ENCODE measurements at regions of chr16 and their contacts with region 1.

Region 1: GRCh38 chr16:2009789-2010510 is at the start of gene ZNF598:
- DNase-seq: peak; percentile 90
- ATAC-seq: peak; percentile 93
- H3K4me3 Mint-ChIP-seq: peak within 1 kb of the TSS; percentile 95
- H3K27ac Mint-ChIP-seq: peak within 1 kb of the TSS; percentile 90
- H3K4me1 Mint-ChIP-seq: peaks cover 35% of the 10 kb centered on the region
- H3K27me3 Mint-ChIP-seq: no peaks in the 10 kb centered on the region
- total RNA-seq, gene ZNF598: 64.6 to 69.8 TPM

Region 2: GRCh38 chr16:1705688-1706385 is 304.1 kb before region 1 on chr16 and contains the start of gene MAPK8IP3:
- CTCF ChIA-PET with region 1: no interaction called
- POLR2A ChIA-PET with region 1: no interaction called
- intact Hi-C with region 1: loop called in 1 of 2 experiments (anchors 1 kb)
- DNase-seq: peak; percentile 96
- ATAC-seq: peak; percentile 80
- H3K4me3 Mint-ChIP-seq: peak within 1 kb of the TSS; percentile 92
- H3K27ac Mint-ChIP-seq: peak within 1 kb of the TSS; percentile 90
- H3K4me1 Mint-ChIP-seq: peaks cover 32% of the 10 kb centered on the region
- H3K27me3 Mint-ChIP-seq: no peaks in the 10 kb centered on the region
- total RNA-seq, gene MAPK8IP3: 56.7 to 57.6 TPM

Region 3: DNA sequence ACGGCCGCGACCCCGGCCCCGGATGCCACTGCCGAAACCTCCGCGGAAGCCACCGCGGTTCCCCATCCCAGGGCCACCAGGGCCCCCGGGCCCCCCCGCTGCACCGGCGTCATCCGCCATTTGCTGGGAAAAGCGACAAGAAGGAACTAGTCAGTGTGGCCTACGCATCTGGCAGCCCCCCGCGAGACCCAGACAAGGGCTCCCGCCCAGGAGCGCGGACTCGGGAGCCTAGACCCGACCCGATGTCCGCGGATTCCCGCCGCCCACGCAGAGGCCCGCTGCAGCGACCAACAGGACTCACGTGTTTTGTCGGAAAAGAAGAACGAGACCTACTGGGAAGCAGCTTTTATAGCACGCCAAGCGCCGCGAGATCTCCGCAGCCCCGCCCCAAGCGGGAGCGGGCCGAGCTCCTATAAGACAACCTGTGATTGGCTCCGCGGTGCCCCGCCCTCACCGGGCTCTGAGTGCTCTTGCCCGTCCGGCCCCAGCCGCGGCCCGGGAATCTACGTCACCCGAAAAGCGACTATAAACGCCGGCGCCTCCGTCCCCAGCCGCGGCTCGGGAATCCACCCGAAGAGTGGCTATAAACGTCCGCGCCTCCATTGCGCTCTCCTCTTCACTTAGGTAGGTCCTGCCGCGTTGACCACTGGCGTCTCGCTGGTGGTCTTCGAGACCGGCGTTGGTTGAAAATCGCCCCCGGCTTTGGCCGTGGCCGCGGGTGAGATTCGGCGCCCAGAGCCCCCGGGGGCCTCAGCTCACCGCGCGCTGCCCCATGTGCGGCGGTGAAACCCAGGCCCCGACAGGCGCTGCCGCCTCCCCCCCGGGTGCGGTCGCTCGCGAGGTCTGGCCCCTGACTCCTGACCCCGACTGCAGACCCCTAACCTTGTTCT is 45.2 kb before region 1 on chr16 and contains the start of gene RPS2:
- CTCF ChIA-PET with region 1: no interaction called
- POLR2A ChIA-PET with region 1: interaction called, 3 read pairs
- intact Hi-C with region 1: loop called in 1 of 2 experiments (anchors 5 kb)
- DNase-seq: peak; percentile 100
- ATAC-seq: peak; percentile 81
- H3K4me3 Mint-ChIP-seq: peak within 1 kb of the TSS; percentile 96
- H3K27ac Mint-ChIP-seq: peak within 1 kb of the TSS; percentile 99
- H3K4me1 Mint-ChIP-seq: peaks cover 38% of the 10 kb centered on the region
- H3K27me3 Mint-ChIP-seq: no peaks in the 10 kb centered on the region
- total RNA-seq, gene RPS2: 5,351 to 6,287 TPM

Region 4: GRCh38 chr16:1991948-1992703 is 17.8 kb before region 1 on chr16:
- CTCF ChIA-PET with region 1: interaction called, 12 read pairs
- POLR2A ChIA-PET with region 1: interaction called, 7 read pairs
- intact Hi-C with region 1: loop called (anchors 1 to 2 kb)
- DNase-seq: peak; percentile 100
- ATAC-seq: peak; percentile 70
- H3K4me3 Mint-ChIP-seq: peak overlapping the region; percentile 56
- H3K27ac Mint-ChIP-seq: no peak overlapping the region
- H3K4me1 Mint-ChIP-seq: peaks cover 27% of the 10 kb centered on the region
- H3K27me3 Mint-ChIP-seq: peaks cover 15% of the 10 kb centered on the region

Region 5: GRCh38 chr16:2039274-2040031 is 29.5 kb after region 1 on chr16:
- CTCF ChIA-PET with region 1: no interaction called
- POLR2A ChIA-PET with region 1: no interaction called
- intact Hi-C with region 1: no loop called
- DNase-seq: no peak
- ATAC-seq: no peak
- H3K4me3 Mint-ChIP-seq: no peak overlapping the region
- H3K27ac Mint-ChIP-seq: no peak overlapping the region
- H3K4me1 Mint-ChIP-seq: no peaks in the 10 kb centered on the region
- H3K27me3 Mint-ChIP-seq: no peaks in the 10 kb centered on the region

Region 6: GRCh38 chr16:2147981-2148671 is 138.2 kb after region 1 on chr16 and contains the start of gene RAB26:
- CTCF ChIA-PET with region 1: no interaction called
- POLR2A ChIA-PET with region 1: interaction called, 3 read pairs
- intact Hi-C with region 1: loop called in 1 of 2 experiments (anchors 5 kb)
- DNase-seq: peak; percentile 64
- ATAC-seq: peak; percentile 31
- H3K4me3 Mint-ChIP-seq: peak within 1 kb of the TSS; percentile 38
- H3K27ac Mint-ChIP-seq: no peak within 1 kb of the TSS
- H3K4me1 Mint-ChIP-seq: peaks cover 15% of the 10 kb centered on the region
- H3K27me3 Mint-ChIP-seq: no peaks in the 10 kb centered on the region
- total RNA-seq, gene RAB26: 0.21 TPM in 1 of 2 experiments, not detected in the other

Region 7: DNA sequence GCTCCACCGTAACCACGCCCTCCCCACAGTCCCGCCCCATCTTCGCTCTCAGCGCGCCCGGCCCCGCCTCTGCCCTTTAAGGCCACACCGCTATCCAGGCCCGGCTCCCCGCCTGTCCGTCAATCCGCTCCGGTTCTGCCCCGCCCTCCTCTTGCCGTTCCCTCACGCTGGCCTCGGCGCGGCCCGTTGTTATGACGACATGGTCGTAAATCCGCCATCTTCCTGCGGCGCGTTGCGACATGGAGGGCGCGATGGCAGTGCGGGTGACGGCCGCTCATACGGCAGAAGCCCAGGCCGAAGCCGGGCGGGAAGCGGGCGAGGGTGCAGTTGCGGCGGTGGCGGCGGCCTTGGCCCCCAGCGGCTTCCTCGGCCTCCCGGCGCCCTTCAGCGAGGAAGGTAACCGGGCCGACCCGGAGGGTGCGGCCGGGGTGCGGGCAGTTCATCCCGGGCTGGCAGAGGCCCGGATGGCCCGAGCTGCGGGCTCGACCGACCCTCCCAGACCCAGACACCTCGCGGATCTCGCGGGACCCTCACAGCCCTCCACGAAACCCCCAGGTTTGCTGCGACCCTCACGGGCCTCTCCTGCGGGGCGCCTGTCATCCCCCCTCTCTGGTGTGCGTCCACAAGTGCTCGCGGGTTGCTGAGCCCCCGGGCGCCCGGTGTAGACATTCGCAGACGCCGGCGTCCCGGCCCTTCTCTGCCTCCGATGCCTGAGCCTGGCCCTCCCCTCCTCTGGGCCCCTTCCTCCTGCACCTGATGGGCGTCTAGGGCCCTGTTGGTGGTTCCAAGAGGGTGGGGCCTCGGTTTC is 213.6 kb after region 1 on chr16 and contains the start of gene E4F1:
- CTCF ChIA-PET with region 1: no interaction called
- POLR2A ChIA-PET with region 1: no interaction called
- intact Hi-C with region 1: loop called in 1 of 2 experiments (anchors 1 kb)
- DNase-seq: peak; percentile 100
- ATAC-seq: peak; percentile 99
- H3K4me3 Mint-ChIP-seq: peak within 1 kb of the TSS; percentile 78
- H3K27ac Mint-ChIP-seq: peak within 1 kb of the TSS; percentile 13
- H3K4me1 Mint-ChIP-seq: peaks cover 15% of the 10 kb centered on the region
- H3K27me3 Mint-ChIP-seq: no peaks in the 10 kb centered on the region
- total RNA-seq, gene E4F1: 18.0 to 18.6 TPM

Measured in activated CD4-positive, alpha-beta T cell treated with anti-CD3 and anti-CD28 coated beads for 36 hours (primary cell).